ENCODE measurements at regions of chr10 and their contacts with region 1.

Region 1: DNA sequence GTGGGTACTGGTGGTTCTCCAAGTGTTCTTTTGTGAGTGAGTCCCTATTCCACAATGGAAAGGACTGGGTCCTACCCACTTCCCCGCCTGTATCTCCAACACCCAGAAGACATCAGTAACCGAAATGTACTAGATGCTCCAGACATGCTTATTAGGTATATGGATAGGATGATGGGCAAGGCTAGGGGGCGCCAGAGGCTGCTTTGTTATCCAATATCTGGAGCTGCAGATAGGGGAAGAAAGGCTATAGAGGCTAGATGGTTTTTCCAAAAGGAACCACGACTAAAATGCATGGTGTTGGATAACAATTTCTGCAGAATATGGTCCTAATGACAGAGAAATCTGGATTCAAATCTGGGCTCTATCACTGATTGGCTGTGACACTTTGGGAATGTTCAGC is 56.2 kb upstream of the TM9SF3 start:
- DNase-seq: peak in 1 of 2 experiments; percentile 35
- H3K4me3 ChIP-seq: no peak overlapping the region
- H3K27ac ChIP-seq: no peak overlapping the region
- H3K4me1 ChIP-seq: peaks cover 23% of the 10 kb centered on the region
- H3K27me3 ChIP-seq: no peaks in the 10 kb centered on the region
- CTCF ChIP-seq: peak; percentile 47; the same call in 1 of the 2 replicates

Region 2: GRCh38 chr10:94879214-94879613 is 1763.8 kb before region 1 on chr10:
- CTCF ChIA-PET with region 1: no interaction called
- POLR2A ChIA-PET with region 1: no interaction called
- intact Hi-C with region 1: no loop called
- DNase-seq: no peak
- H3K4me3 ChIP-seq: no peak overlapping the region
- H3K27ac ChIP-seq: no peak overlapping the region
- H3K4me1 ChIP-seq: no peaks in the 10 kb centered on the region
- H3K27me3 ChIP-seq: no peaks in the 10 kb centered on the region
- CTCF ChIP-seq: no peak

Region 3: GRCh38 chr10:96814264-96814663 is 171.3 kb after region 1 on chr10:
- CTCF ChIA-PET with region 1: no interaction called
- POLR2A ChIA-PET with region 1: no interaction called
- intact Hi-C with region 1: no loop called
- DNase-seq: peak; percentile 6 to 51
- H3K4me3 ChIP-seq: no peak overlapping the region
- H3K27ac ChIP-seq: no peak overlapping the region
- H3K4me1 ChIP-seq: no peaks in the 10 kb centered on the region
- H3K27me3 ChIP-seq: no peaks in the 10 kb centered on the region
- CTCF ChIP-seq: no peak

Region 4: DNA sequence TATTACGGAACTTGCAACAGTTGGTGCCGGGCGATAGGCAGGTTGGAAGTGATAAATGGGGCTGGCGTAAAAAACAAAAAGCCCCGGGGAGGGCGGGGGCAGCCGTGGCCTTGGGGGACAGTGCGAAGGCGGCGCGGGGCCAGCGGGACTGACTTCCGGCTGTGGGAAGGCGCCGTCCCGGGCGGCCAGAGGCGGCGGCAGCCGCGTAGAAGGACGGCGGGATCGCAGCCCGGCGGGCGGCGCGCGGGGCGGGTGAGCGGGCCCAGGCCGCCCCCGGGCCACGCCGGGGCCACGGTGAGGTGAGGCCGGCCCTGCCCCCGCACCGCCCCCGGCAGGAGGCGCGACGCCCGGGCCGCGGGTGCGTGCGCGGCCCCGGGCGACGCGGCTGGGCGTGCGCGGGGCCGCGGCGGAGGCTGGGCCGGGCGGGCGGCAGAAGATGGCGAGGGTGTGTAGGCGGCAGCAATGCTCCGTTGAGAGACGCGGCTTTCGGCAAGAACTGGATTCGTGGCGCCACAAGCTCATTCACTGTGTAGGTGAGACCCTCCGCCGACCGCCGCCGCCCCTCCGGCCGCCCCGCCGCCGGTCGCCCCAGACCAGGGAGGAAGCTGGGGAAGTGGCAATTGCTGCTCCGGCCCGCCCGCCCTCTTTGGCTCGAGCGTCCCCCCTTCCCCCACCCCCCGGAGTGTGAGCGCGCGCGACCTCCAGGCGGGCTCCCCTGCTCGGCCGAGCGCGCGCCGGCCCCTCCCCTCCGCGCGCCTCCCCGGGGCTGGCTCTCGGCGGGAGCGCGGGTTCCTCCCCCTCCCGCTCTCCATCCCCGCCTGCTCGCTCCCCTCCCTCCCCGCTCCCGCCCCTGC is 189.1 kb after region 1 on chr10 and contains the start of gene LCOR:
- CTCF ChIA-PET with region 1: no interaction called
- POLR2A ChIA-PET with region 1: interaction called, 8 read pairs
- intact Hi-C with region 1: loop called (anchors 2 kb)
- DNase-seq: peak; percentile 65 to 79
- H3K4me3 ChIP-seq: peak within 1 kb of the TSS; percentile 75
- H3K27ac ChIP-seq: peak within 1 kb of the TSS; percentile 87
- H3K4me1 ChIP-seq: peaks cover 18% of the 10 kb centered on the region
- H3K27me3 ChIP-seq: no peaks in the 10 kb centered on the region
- CTCF ChIP-seq: no peak
- total RNA-seq, gene LCOR: 28.1 and 36.4 TPM in 2 replicates